Spleen (tissue), 13 donors: ENCODE measurements at regions of chr2 and their contacts with region 1.

Region 1: GRCh38 chr2:65264821-65265670 is 37.4 kb downstream of the ACTR2 start:
- DNase-seq: no peak
- H3K4me3 ChIP-seq: no peak overlapping the region
- H3K27ac ChIP-seq: no peak overlapping the region
- H3K4me1 ChIP-seq: peaks cover 0 to 44% (median 12%) of the 10 kb centered on the region in 6 donors
- H3K27me3 ChIP-seq: no peaks in the 10 kb centered on the region
- CTCF ChIP-seq: peak in 9 of 11 experiments; percentile 27 to 80 (median 65)
- POLR2A ChIP-seq: no peak

Region 2: DNA sequence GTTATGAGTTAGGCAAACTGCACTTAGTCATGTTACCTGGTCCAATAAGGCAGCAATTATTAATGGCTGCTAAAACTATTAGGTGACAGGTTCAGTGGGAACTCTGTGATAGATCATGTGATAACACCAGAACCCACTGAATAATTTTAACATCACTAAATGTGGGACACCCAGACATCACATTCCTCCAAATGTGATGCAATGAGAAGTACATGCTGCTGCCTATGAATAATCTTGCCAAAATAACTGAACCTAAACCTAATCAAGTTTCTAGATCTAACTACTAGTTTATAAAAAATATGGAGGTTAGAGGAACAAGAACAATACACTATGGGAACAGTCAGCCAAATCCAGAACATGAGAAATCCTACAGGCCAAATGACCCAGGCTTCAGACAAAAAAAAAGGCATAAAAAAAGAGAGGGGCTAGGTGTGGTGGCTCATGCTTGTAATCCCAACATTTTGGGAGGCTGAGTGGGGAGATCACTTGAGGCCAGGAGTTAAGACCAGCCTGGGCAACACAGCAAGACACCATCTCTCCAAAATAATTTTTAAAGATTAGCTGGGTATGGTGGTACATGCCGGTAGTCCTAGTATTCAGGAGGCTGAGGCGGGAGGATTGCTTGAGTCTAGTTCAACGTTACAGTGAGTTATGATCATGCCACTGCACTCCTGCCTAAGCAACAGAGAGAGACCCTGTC is 44.5 kb before region 1 on chr2:
- intact Hi-C with region 1: no loop called
- DNase-seq: no peak
- H3K4me3 ChIP-seq: no peak overlapping the region
- H3K27ac ChIP-seq: no peak overlapping the region
- H3K4me1 ChIP-seq: no peaks in the 10 kb centered on the region
- H3K27me3 ChIP-seq: no peaks in the 10 kb centered on the region
- CTCF ChIP-seq: no peak
- POLR2A ChIP-seq: no peak

Region 3: DNA sequence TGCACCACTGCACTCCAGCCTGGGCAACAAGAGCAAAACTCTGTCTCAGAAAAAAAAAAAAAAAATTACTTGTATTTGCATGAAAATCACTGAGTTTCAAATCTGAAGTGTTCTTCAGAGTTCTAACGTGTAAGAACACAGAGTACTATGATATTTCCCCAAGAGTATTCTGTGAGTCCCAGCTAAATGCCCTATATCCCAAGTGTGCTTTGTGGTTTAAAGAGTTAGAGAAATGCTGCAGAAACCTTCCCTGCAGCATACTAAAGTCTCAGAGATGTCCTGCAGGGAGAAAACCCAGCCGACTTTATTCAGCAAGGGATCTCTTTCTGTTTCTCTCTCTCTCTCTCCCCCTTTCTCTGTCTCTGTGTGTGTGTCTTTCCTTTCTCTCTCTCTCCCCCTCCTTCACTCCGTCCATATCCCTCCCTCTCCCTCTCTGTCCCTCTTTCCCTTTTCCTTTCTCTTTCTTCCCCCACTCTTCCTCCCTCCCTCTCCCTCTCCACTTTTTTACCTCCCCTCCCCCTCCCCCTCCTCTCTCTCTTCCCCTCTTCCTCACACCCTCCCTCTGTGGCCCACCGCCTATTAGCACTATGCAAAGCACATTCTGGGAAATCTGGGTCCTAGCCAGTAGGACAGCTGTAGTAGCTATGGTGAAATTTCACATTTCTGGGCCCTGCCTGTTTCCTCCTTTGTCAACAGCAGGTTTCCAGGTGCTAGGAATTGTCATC is 16.7 kb after region 1 on chr2:
- intact Hi-C with region 1: no loop called
- DNase-seq: no peak
- H3K4me3 ChIP-seq: no peak overlapping the region
- H3K27ac ChIP-seq: no peak overlapping the region
- H3K4me1 ChIP-seq: peaks cover 0 to 16% (median 13%) of the 10 kb centered on the region in 6 donors
- H3K27me3 ChIP-seq: no peaks in the 10 kb centered on the region
- CTCF ChIP-seq: no peak
- POLR2A ChIP-seq: no peak

Region 4: GRCh38 chr2:65432227-65433190 is 167.5 kb after region 1 on chr2 and contains the start of gene SPRED2:
- intact Hi-C with region 1: loop called (anchors 10 kb)
- DNase-seq: peak; percentile 92
- H3K4me3 ChIP-seq: peak within 1 kb of the TSS; percentile 73 to 98 (median 90)
- H3K27ac ChIP-seq: peak within 1 kb of the TSS; percentile 53 to 92 (median 86)
- H3K4me1 ChIP-seq: peaks cover 6 to 57% (median 38%) of the 10 kb centered on the region in 6 donors
- H3K27me3 ChIP-seq: peaks cover 0 to 34% (median 0%) of the 10 kb centered on the region in 7 donors
- CTCF ChIP-seq: peak in 3 of 11 experiments; percentile 25 to 34 (median 27)
- POLR2A ChIP-seq: no peak
- total RNA-seq, gene SPRED2: 12.6 to 26.4 (median 14.9) TPM

Region 5: GRCh38 chr2:65554765-65555591 is 289.9 kb after region 1 on chr2:
- intact Hi-C with region 1: loop called (anchors 2 kb)
- DNase-seq: no peak
- H3K4me3 ChIP-seq: no peak overlapping the region
- H3K27ac ChIP-seq: no peak overlapping the region
- H3K4me1 ChIP-seq: peaks cover 0 to 20% (median 10%) of the 10 kb centered on the region in 6 donors
- H3K27me3 ChIP-seq: no peaks in the 10 kb centered on the region
- CTCF ChIP-seq: no peak
- POLR2A ChIP-seq: no peak

Region 6: DNA sequence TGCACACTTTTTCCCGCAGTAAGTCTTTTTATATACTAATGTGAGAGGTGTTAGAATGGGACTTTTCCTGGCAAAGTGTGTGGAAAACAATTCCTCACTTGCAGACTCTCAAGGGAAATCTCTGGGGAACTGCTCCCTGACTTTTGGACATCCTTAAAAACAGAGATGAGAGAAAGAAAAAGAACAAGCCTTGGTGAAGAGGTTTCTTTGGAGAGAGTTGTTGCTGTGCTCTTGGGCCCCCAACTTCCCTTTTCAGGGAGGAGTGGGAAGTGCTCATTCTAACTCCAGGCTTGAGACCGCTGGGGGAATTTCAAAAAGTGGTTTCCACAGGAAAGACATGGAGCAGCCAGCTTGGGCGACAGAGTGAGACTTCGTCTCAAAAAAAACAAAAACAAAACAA is 309.9 kb after region 1 on chr2:
- intact Hi-C with region 1: loop called (anchors 5 kb)
- DNase-seq: peak; percentile 9
- H3K4me3 ChIP-seq: no peak overlapping the region
- H3K27ac ChIP-seq: no peak overlapping the region
- H3K4me1 ChIP-seq: peaks cover 0 to 11% (median 1%) of the 10 kb centered on the region in 6 donors
- H3K27me3 ChIP-seq: no peaks in the 10 kb centered on the region
- CTCF ChIP-seq: no peak
- POLR2A ChIP-seq: no peak

Region 7: DNA sequence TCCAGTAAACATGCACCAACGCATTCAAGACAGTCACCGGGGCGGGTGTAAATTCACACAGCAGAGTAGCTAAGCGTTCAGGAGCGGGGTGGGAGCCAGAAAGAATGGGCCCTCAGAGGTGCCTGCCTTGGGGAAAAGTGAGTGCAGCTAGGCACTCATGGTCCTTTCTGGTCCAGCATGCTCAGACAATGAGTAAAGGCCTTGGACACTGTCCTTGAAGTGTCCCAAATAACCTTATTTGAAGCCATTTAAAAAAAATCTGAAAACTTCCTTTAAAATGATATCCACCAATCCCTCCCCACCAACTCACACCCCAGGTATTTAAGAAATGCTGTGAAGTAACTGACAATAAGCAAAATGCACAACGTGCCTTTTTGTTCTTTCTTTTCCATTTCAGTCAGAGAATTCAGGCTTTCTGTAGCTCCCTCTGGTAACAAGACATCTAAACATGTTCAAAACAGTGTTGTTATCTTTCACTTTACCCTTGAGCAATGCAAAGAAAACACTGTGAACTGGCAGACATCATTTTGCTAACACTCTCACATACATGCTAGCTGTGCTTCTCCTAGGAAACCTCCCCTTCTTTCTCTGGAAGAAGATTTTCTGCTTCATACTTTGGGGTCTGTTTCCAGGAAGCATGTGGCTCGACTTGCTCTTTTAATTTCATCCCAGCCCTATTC is 612.4 kb after region 1 on chr2:
- intact Hi-C with region 1: no loop called
- DNase-seq: no peak
- H3K4me3 ChIP-seq: no peak overlapping the region
- H3K27ac ChIP-seq: no peak overlapping the region
- H3K4me1 ChIP-seq: no peaks in the 10 kb centered on the region
- H3K27me3 ChIP-seq: no peaks in the 10 kb centered on the region
- CTCF ChIP-seq: no peak
- POLR2A ChIP-seq: no peak